ENCODE measurements at regions of chr11 and their contacts with region 1.

Region 1: DNA sequence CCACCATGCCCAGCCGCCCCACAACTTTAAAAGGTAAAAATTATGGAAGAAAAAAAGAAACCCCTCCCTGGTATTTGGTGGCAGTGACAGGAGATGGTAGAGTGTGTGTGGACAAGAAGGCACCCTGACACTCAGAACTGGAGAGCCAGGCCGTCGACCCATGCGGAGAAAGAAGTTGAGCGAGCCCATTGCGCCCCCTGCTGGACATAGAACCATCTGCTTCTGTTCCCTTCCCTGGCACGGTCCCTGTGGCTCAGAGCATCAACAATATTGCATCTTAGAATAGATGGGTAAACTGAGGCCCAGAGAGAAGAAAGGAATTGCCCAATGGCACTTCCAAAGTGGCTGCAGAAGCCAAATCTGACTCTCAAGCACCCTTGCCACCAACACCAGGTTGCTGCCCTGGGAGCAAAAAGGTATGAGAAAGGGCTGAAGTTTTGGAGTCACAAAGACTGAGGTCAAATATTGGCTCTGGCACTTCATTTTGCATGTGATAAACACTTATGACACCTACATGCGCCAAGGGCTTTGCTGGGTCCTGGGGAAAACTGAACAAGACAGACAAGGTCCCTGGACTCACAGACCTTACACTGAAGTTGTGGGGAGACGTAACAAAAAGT is 8.6 kb downstream of the MRPL11 start:
- DNase-seq: peak; percentile 83
- ATAC-seq: peak; percentile 92
- H3K4me3 Mint-ChIP-seq: no peak overlapping the region
- H3K27ac Mint-ChIP-seq: no peak overlapping the region
- H3K4me1 Mint-ChIP-seq: no peaks in the 10 kb centered on the region
- H3K27me3 Mint-ChIP-seq: peaks cover 9% of the 10 kb centered on the region
- CTCF ChIP-seq: peak; percentile 92

Region 2: DNA sequence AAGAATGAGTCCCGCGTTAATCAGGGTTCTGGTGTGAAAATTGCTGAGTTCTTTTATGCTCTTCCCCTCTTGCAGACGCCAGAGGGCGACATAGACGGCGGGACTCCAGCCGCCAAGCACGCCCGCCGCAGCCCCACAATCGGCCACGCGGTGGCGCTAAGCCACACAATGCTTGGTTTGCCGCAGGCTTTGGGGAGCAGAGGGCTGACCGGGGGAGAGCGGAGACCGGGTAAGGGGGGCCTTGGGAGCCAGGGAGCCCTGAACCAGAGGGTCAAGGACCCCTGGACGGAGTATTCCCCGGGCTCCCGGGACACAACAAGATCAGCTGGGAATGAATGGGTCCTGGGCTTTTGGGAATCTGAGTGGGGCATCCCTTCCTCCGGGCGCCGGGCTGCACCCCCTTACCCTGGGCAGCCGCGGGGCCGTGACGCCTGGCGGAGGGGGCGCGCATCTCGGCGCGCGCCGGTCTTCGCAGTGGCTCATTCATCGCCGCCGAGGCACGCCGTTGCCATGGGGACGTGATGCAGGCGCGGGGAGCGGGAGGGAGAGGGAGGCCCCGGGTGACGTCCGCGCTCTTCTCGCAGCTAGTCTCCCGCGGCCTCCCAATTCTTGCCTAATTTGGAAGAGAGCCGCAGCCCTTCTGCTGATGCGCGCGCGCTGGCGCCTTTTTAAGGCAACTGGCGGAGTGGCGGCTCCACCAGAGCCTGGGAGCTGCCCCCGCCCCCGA is 21.4 kb before region 1 on chr11:
- CTCF ChIA-PET with region 1: interaction called, 36 read pairs
- POLR2A ChIA-PET with region 1: no interaction called
- DNase-seq: peak; percentile 97
- ATAC-seq: peak; percentile 76
- H3K4me3 Mint-ChIP-seq: peak overlapping the region; percentile 66
- H3K27ac Mint-ChIP-seq: no peak overlapping the region
- H3K4me1 Mint-ChIP-seq: peaks cover 10% of the 10 kb centered on the region
- H3K27me3 Mint-ChIP-seq: peaks cover 34% of the 10 kb centered on the region
- CTCF ChIP-seq: peak; percentile 99

Region 3: GRCh38 chr11:66815646-66816045 is 385.6 kb after region 1 on chr11:
- CTCF ChIA-PET with region 1: no interaction called
- POLR2A ChIA-PET with region 1: no interaction called
- DNase-seq: no peak
- ATAC-seq: no peak
- H3K4me3 Mint-ChIP-seq: no peak overlapping the region
- H3K27ac Mint-ChIP-seq: no peak overlapping the region
- H3K4me1 Mint-ChIP-seq: peaks cover 19% of the 10 kb centered on the region
- H3K27me3 Mint-ChIP-seq: no peaks in the 10 kb centered on the region
- CTCF ChIP-seq: no peak